PC-9 (cell line): ENCODE measurements at regions of chr18 and their contacts with region 1.

Region 1: GRCh38 chr18:36572135-36572856 is 256.5 kb downstream of the TPGS2 start:
- DNase-seq: peak in 1 of 2 experiments; percentile 35
- H3K4me3 ChIP-seq: no peak overlapping the region
- H3K27ac ChIP-seq: no peak overlapping the region
- H3K4me1 ChIP-seq: no peaks in the 10 kb centered on the region
- H3K27me3 ChIP-seq: no peaks in the 10 kb centered on the region
- CTCF ChIP-seq: peak; percentile 57

Region 2: GRCh38 chr18:36284671-36285295 is 287.5 kb before region 1 on chr18:
- CTCF ChIA-PET with region 1: no interaction called
- POLR2A ChIA-PET with region 1: no interaction called
- intact Hi-C with region 1: loop called (anchors 2 kb)
- DNase-seq: peak; percentile 11 to 41
- H3K4me3 ChIP-seq: no peak overlapping the region
- H3K27ac ChIP-seq: no peak overlapping the region
- H3K4me1 ChIP-seq: no peaks in the 10 kb centered on the region
- H3K27me3 ChIP-seq: no peaks in the 10 kb centered on the region
- CTCF ChIP-seq: peak; percentile 81

Region 3: DNA sequence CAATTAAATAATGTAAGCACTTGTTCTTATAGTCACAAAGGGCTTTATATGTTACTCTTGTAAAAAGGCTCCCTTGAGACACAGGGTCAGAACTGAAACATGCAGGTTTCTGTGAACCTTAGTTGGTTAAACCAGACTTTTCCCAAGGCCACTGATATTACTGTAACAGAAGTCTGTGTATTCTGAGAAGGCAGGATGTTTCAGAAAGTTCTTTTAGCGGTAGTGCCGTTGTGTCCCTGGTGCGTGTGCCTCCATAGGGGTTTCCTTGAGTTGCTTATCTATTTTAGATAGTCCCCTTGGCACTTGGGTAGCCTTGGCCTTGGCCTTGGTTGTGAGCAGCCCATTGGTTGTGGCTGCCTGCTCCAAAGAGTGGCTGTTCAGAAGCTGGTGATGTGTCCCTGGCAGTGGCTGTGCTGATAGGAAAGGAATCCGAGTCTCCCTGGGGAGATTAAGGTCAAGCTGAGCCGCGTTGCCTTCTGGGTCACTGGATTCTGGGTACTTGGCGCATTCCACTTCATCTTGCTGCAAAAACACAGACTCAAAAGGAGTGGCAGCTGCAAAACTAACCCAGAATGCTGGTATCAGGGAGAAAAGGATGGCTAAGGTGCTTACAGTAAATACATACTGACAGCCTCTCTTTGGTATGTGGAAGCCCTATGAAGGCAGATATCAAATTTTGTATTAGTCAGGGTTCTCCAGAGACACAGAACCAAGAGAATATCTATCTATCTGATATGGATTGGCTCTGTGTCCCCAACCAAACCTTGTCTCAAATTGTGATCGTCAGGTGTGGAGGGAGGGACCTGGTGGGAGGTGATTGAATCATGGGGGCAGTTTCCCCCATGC is 205.1 kb before region 1 on chr18:
- CTCF ChIA-PET with region 1: no interaction called
- POLR2A ChIA-PET with region 1: no interaction called
- intact Hi-C with region 1: no loop called
- DNase-seq: no peak
- H3K4me3 ChIP-seq: no peak overlapping the region
- H3K27ac ChIP-seq: no peak overlapping the region
- H3K4me1 ChIP-seq: 0 out of 2 replicates have a peak, but pooled peaks cover under 1% of the 10 kb centered on the region
- H3K27me3 ChIP-seq: no peaks in the 10 kb centered on the region
- CTCF ChIP-seq: no peak

Region 4: GRCh38 chr18:36534154-36534688 is 38.1 kb before region 1 on chr18:
- CTCF ChIA-PET with region 1: no interaction called
- POLR2A ChIA-PET with region 1: no interaction called
- intact Hi-C with region 1: no loop called
- DNase-seq: no peak
- H3K4me3 ChIP-seq: no peak overlapping the region
- H3K27ac ChIP-seq: no peak overlapping the region
- H3K4me1 ChIP-seq: 0 out of 2 replicates have a peak, but pooled peaks cover 5% of the 10 kb centered on the region
- H3K27me3 ChIP-seq: no peaks in the 10 kb centered on the region
- CTCF ChIP-seq: no peak

Region 5: DNA sequence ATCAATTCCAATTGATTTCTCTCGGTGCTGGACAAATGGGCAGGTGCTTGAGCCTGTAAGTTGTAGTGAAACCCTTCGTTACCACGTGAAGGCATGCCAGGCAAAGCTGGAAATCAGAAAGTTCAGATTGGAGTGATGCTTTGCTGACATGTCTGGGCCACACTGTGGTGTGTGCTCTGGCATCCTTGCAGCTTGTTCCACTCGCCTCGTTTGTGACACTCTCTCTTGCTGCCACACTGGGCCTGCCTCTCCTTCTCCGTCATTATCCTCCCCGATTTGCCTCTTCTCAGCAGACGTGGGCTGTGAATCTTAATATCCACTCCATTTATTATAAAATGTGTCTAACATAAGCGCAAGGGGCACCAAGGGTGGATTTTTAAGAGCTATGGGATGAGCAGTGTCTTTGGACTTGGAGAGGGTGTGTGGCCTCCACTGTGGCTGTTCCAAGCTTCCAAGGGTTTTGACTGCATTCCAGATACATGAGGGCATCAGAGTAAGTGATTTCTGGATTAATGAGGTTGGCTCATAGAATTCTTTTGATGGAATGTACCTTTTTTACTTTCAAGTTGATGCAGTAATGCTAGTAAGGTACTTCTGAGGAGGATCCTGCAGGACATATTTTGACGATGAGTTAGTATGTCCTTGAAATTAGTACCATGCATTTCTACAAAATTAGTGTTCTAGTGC is 17.7 kb after region 1 on chr18:
- CTCF ChIA-PET with region 1: no interaction called
- POLR2A ChIA-PET with region 1: no interaction called
- intact Hi-C with region 1: no loop called
- DNase-seq: no peak
- H3K4me3 ChIP-seq: no peak overlapping the region
- H3K27ac ChIP-seq: no peak overlapping the region
- H3K4me1 ChIP-seq: no peaks in the 10 kb centered on the region
- H3K27me3 ChIP-seq: no peaks in the 10 kb centered on the region
- CTCF ChIP-seq: no peak

Region 6: GRCh38 chr18:36757081-36757480 is 184.8 kb after region 1 on chr18:
- CTCF ChIA-PET with region 1: no interaction called
- POLR2A ChIA-PET with region 1: no interaction called
- intact Hi-C with region 1: loop called (anchors 2 kb)
- DNase-seq: no peak
- H3K4me3 ChIP-seq: no peak overlapping the region
- H3K27ac ChIP-seq: no peak overlapping the region
- H3K4me1 ChIP-seq: peaks cover 7% of the 10 kb centered on the region; the same call in 1 of the 2 replicates
- H3K27me3 ChIP-seq: no peaks in the 10 kb centered on the region
- CTCF ChIP-seq: peak; percentile 76

Region 7: GRCh38 chr18:36808681-36809080 is 236.4 kb after region 1 on chr18:
- CTCF ChIA-PET with region 1: no interaction called
- POLR2A ChIA-PET with region 1: no interaction called
- intact Hi-C with region 1: no loop called
- DNase-seq: no peak
- H3K4me3 ChIP-seq: no peak overlapping the region
- H3K27ac ChIP-seq: no peak overlapping the region
- H3K4me1 ChIP-seq: no peaks in the 10 kb centered on the region
- H3K27me3 ChIP-seq: no peaks in the 10 kb centered on the region
- CTCF ChIP-seq: no peak